PC-3 (cell line): ENCODE measurements at regions of chr12 and their contacts with region 1.

Region 1: GRCh38 chr12:75722714-75723200 is 211.3 kb upstream of the KRR1 start:
- DNase-seq: peak; percentile 88
- ATAC-seq: peak; percentile 37
- H3K4me3 ChIP-seq: no peak overlapping the region
- H3K27ac ChIP-seq: peak overlapping the region; percentile 75
- H3K4me1 ChIP-seq: peaks cover 55% of the 10 kb centered on the region
- H3K27me3 ChIP-seq: no peaks in the 10 kb centered on the region
- CTCF ChIP-seq: no peak

Region 2: GRCh38 chr12:75560167-75560566 is 162.6 kb before region 1 on chr12:
- CTCF ChIA-PET with region 1: interaction called, 4 read pairs
- POLR2A ChIA-PET with region 1: no interaction called
- intact Hi-C with region 1: loop called (anchors 5 kb)
- DNase-seq: peak; percentile 63
- ATAC-seq: peak; percentile 94
- H3K4me3 ChIP-seq: no peak overlapping the region
- H3K27ac ChIP-seq: no peak overlapping the region
- H3K4me1 ChIP-seq: peaks cover 12% of the 10 kb centered on the region
- H3K27me3 ChIP-seq: no peaks in the 10 kb centered on the region
- CTCF ChIP-seq: peak; percentile 66

Region 3: GRCh38 chr12:75684678-75685601 is 37.8 kb before region 1 on chr12:
- CTCF ChIA-PET with region 1: no interaction called
- POLR2A ChIA-PET with region 1: no interaction called
- intact Hi-C with region 1: no loop called
- DNase-seq: no peak
- ATAC-seq: no peak
- H3K4me3 ChIP-seq: no peak overlapping the region
- H3K27ac ChIP-seq: no peak overlapping the region
- H3K4me1 ChIP-seq: no peaks in the 10 kb centered on the region
- H3K27me3 ChIP-seq: no peaks in the 10 kb centered on the region
- CTCF ChIP-seq: no peak

Region 4: DNA sequence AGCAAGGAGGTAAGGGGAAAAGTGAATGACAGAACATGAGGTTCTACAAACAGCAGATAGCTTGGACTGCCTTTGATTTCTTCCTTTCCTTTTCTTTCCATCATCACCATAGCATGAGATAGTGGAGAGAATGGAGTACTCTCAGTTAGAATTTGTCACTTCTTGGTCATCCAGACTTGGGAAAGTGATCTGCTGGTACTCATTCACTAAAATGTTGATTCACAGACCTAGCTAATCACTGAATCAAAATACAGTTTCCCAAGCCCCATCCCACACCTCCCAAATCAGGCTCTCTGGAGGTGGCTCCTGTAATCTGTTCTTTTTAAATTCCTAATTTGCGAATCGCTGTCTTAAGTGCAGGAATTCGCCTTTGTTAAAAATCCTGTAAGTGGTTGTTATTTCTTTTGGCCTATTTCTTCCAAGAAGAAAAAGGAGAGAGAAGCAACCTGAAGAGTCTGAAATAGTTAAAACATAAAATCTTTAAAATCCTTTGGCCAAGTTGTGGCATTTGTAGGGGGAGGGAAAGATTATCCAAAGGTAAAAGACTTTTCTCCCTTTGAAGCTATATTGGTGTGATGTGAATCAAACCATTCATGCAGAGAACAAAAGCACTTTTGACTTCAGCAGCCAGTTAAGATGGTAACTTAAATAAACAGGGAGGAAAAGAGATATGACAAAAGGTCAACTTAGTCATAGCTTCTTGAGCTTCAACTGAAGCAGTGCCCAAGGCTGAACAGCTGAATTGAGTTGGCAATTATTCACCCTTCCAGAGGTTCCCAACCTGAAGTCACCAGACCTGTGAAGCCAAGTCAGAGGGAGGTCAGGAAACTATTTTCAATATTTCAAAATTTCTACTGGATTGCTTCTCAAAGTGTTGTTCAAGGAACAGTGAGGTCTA is 43.8 kb after region 1 on chr12:
- CTCF ChIA-PET with region 1: no interaction called
- POLR2A ChIA-PET with region 1: no interaction called
- intact Hi-C with region 1: loop called (anchors 5 kb)
- DNase-seq: peak; percentile 94
- ATAC-seq: peak; percentile 89
- H3K4me3 ChIP-seq: no peak overlapping the region
- H3K27ac ChIP-seq: peak overlapping the region; percentile 85
- H3K4me1 ChIP-seq: peaks cover 35% of the 10 kb centered on the region
- H3K27me3 ChIP-seq: no peaks in the 10 kb centered on the region
- CTCF ChIP-seq: no peak

Region 5: DNA sequence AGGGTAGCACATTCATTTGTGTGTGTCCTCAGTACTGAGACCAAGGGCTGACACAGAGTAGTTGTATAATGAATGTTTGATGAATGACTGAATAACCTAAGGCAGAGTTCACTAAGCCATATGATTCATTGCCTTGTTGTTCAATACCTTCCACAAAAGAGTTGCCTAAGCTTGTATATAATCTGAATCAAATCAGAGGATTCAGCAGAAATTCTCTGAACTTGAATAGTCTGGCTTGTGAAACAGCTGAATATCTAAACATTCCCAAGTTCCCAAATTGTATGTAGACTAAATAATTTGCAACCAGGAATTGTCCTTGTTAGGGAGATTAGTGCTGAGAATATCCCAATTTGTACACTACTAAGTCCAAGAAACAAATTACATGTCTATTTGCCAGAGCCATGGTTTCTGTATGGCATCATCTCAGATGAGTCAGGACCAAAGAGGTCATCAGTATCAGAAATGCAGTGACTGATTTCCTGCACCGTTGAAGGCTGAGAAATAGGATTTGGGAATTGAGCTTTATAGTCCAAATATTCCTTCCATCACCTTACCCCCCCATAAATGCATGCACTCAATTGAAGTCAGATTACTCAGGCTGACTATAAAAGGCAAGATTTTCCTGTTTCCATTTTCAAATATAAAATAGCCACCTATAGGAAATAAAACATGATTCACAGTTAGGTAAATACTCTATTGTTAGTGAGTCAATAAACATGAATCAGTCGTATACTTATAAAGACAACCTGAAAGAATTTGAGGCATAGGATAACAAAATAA is 140.1 kb after region 1 on chr12:
- CTCF ChIA-PET with region 1: no interaction called
- POLR2A ChIA-PET with region 1: no interaction called
- intact Hi-C with region 1: loop called (anchors 5 kb)
- DNase-seq: peak; percentile 97
- ATAC-seq: peak; percentile 77
- H3K4me3 ChIP-seq: peak overlapping the region; percentile 36; the same call in 1 of the 2 replicates
- H3K27ac ChIP-seq: peak overlapping the region; percentile 98
- H3K4me1 ChIP-seq: peaks cover 57% of the 10 kb centered on the region
- H3K27me3 ChIP-seq: no peaks in the 10 kb centered on the region
- CTCF ChIP-seq: no peak

Region 6: GRCh38 chr12:75944097-75944904 is 221.5 kb after region 1 on chr12:
- CTCF ChIA-PET with region 1: no interaction called
- POLR2A ChIA-PET with region 1: no interaction called
- intact Hi-C with region 1: loop called (anchors 2 kb)
- DNase-seq: peak; percentile 96
- ATAC-seq: peak; percentile 86
- H3K4me3 ChIP-seq: peak overlapping the region; percentile 23; the same call in 1 of the 2 replicates
- H3K27ac ChIP-seq: peak overlapping the region; percentile 98
- H3K4me1 ChIP-seq: peaks cover 23% of the 10 kb centered on the region
- H3K27me3 ChIP-seq: no peaks in the 10 kb centered on the region
- CTCF ChIP-seq: no peak